Activated CD8-positive, alpha-beta T cell treated with anti-CD3 and anti-CD28 coated beads for 36 hours (primary cell): ENCODE measurements at regions of chr6 and their contacts with region 1.

Region 1: GRCh38 chr6:85323435-85324040 is 126.3 kb upstream of the NT5E start:
- DNase-seq: peak; percentile 91
- ATAC-seq: peak; percentile 75
- H3K4me3 Mint-ChIP-seq: no peak overlapping the region
- H3K27ac Mint-ChIP-seq: no peak overlapping the region
- H3K4me1 Mint-ChIP-seq: no peaks in the 10 kb centered on the region
- H3K27me3 Mint-ChIP-seq: peaks cover 7% of the 10 kb centered on the region
- CTCF ChIP-seq: peak; percentile 87

Region 2: DNA sequence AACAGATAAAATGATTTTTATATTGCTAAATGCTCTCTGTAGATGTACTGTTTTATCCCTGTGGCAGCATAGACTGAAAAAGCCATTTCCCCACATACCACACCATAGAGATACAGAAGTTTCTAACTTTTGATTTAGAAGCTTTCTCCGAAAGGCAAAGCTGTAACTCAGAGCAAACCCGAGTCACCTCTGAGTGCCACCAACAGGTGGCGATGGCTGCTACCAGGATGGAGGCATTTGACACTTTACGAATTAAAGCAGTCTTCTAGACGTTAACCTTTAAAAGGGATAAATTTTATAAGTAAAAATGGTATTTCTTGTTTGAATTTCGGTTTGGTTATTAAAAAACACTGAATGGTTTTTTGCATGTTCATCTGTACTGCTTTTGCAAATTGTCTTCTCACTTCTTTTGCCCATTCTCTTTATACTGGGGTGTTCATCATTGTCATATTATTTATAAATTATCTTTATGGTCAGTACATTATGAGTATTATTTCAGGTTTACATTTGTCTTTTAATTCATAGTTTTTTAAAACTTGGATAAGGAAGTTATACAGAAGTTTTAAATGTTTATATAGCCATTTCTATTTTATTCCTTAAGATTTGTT is 895.1 kb before region 1 on chr6:
- CTCF ChIA-PET with region 1: interaction called, 6 read pairs
- POLR2A ChIA-PET with region 1: no interaction called
- intact Hi-C with region 1: loop called (anchors 10 kb)
- DNase-seq: peak; percentile 55
- ATAC-seq: no peak
- H3K4me3 Mint-ChIP-seq: no peak overlapping the region
- H3K27ac Mint-ChIP-seq: no peak overlapping the region
- H3K4me1 Mint-ChIP-seq: no peaks in the 10 kb centered on the region
- H3K27me3 Mint-ChIP-seq: peaks cover 3% of the 10 kb centered on the region
- CTCF ChIP-seq: peak; percentile 64

Region 3: GRCh38 chr6:85023721-85024120 is 299.8 kb before region 1 on chr6:
- CTCF ChIA-PET with region 1: no interaction called
- POLR2A ChIA-PET with region 1: no interaction called
- intact Hi-C with region 1: no loop called
- DNase-seq: no peak
- ATAC-seq: no peak
- H3K4me3 Mint-ChIP-seq: no peak overlapping the region
- H3K27ac Mint-ChIP-seq: no peak overlapping the region
- H3K4me1 Mint-ChIP-seq: no peaks in the 10 kb centered on the region
- H3K27me3 Mint-ChIP-seq: no peaks in the 10 kb centered on the region
- CTCF ChIP-seq: no peak

Region 4: DNA sequence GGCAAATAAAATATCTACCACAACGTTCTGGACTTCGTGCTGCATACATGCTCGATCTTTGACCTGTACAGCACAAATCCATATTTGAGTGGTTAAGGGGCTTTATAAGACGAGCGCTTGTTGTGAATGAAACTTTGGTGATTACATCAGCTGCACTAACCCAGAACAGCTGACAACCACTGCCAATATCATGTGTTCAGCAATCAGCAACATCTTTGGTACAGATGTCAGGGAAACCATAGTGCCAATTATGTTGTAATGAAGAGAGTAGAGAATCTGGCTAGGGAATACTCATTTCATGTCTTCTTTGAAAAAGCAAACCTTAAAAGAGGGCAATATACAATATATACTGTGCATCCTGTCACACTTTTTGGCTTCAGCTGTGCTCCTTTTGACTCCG is 62.3 kb before region 1 on chr6:
- CTCF ChIA-PET with region 1: no interaction called
- POLR2A ChIA-PET with region 1: no interaction called
- intact Hi-C with region 1: no loop called
- DNase-seq: no peak
- ATAC-seq: no peak
- H3K4me3 Mint-ChIP-seq: no peak overlapping the region
- H3K27ac Mint-ChIP-seq: no peak overlapping the region
- H3K4me1 Mint-ChIP-seq: no peaks in the 10 kb centered on the region
- H3K27me3 Mint-ChIP-seq: peaks cover 2% of the 10 kb centered on the region
- CTCF ChIP-seq: no peak

Region 5: GRCh38 chr6:85287654-85288053 is 35.9 kb before region 1 on chr6:
- CTCF ChIA-PET with region 1: interaction called, 21 read pairs
- POLR2A ChIA-PET with region 1: no interaction called
- intact Hi-C with region 1: no loop called
- DNase-seq: no peak
- ATAC-seq: no peak
- H3K4me3 Mint-ChIP-seq: no peak overlapping the region
- H3K27ac Mint-ChIP-seq: no peak overlapping the region
- H3K4me1 Mint-ChIP-seq: no peaks in the 10 kb centered on the region
- H3K27me3 Mint-ChIP-seq: peaks cover 7% of the 10 kb centered on the region
- CTCF ChIP-seq: no peak

Region 6: GRCh38 chr6:85344996-85345395 is 21.5 kb after region 1 on chr6:
- CTCF ChIA-PET with region 1: interaction called, 12 read pairs
- POLR2A ChIA-PET with region 1: no interaction called
- intact Hi-C with region 1: no loop called
- DNase-seq: no peak
- ATAC-seq: no peak
- H3K4me3 Mint-ChIP-seq: no peak overlapping the region
- H3K27ac Mint-ChIP-seq: no peak overlapping the region
- H3K4me1 Mint-ChIP-seq: no peaks in the 10 kb centered on the region
- H3K27me3 Mint-ChIP-seq: peaks cover 6% of the 10 kb centered on the region
- CTCF ChIP-seq: no peak

Region 7: GRCh38 chr6:85394853-85395538 is 71.5 kb after region 1 on chr6:
- CTCF ChIA-PET with region 1: no interaction called
- POLR2A ChIA-PET with region 1: no interaction called
- intact Hi-C with region 1: no loop called
- DNase-seq: no peak
- ATAC-seq: no peak
- H3K4me3 Mint-ChIP-seq: no peak overlapping the region
- H3K27ac Mint-ChIP-seq: no peak overlapping the region
- H3K4me1 Mint-ChIP-seq: peaks cover 8% of the 10 kb centered on the region
- H3K27me3 Mint-ChIP-seq: peaks cover 1% of the 10 kb centered on the region
- CTCF ChIP-seq: no peak